ENCODE measurements at regions of chr3 and their contacts with region 1.

Region 1: GRCh38 chr3:170307671-170308403 is 49.7 kb upstream of the SKIL start:
- DNase-seq: no peak
- CTCF ChIP-seq: no peak

Region 2: GRCh38 chr3:170296703-170297102 is 11.1 kb before region 1 on chr3:
- CTCF ChIA-PET with region 1: interaction called, 16 read pairs
- POLR2A ChIA-PET with region 1: no interaction called
- DNase-seq: no peak
- CTCF ChIP-seq: no peak

Region 3: GRCh38 chr3:170368921-170369320 is 61.1 kb after region 1 on chr3:
- CTCF ChIA-PET with region 1: no interaction called
- POLR2A ChIA-PET with region 1: no interaction called
- DNase-seq: no peak
- CTCF ChIP-seq: no peak

Region 4: GRCh38 chr3:170419557-170420087 is 111.8 kb after region 1 on chr3:
- CTCF ChIA-PET with region 1: no interaction called
- POLR2A ChIA-PET with region 1: no interaction called
- DNase-seq: peak; percentile 30
- CTCF ChIP-seq: no peak

Measured in GM10248 (cell line).